Right ventricle myocardium superior (tissue), 1 donor: ENCODE measurements at regions of chr6 and their contacts with region 1.

Region 1: GRCh38 chr6:139369568-139370282 is 4.7 kb downstream of the CITED2 start:
- DNase-seq: no peak
- ATAC-seq: peak; percentile 6

Region 2: GRCh38 chr6:139124887-139125672 is 244.6 kb before region 1 on chr6:
- intact Hi-C with region 1: loop called (anchors 5 kb)
- DNase-seq: peak; percentile 72
- ATAC-seq: peak; percentile 99

Region 3: DNA sequence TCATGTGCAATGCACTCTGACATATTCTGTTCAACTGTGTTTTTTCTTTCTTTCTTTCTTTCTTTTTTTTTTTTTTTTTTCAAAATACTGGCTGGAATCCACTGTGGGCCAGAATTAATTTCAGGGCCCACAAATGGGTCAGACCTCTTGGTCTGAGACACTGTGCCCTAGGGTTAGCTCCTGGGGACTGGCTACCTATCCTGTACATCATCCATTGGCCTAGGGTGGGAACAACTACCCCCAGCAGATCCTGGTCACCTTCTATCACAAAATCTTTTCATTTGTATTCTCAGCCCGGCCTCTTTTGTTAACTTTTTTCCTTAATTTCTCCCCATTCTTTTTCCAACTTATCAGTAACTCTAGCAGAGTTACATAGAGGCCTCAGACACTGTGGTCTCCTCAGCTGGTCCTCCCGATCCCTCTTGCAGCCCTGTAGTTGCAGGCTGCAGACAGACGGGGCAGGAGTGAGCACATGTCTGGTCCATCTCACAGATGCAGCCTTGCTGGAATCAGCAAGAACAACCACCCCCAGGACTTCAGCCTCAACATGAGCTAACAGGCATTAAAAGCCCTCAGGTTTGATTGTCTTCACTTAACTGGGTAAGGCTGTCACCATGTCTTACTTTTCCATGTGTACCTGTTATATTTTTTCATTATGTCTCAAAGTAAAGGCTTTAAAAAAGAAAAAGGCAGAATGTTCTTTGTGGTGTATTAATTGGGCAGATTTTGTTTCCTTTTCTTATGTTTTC is 119.3 kb before region 1 on chr6:
- intact Hi-C with region 1: no loop called
- DNase-seq: peak; percentile 70
- ATAC-seq: peak; percentile 90